CD8-positive, alpha-beta memory T cell (primary cell): ENCODE measurements at regions of chr18 and their contacts with region 1.

Region 1: GRCh38 chr18:59070181-59070912 is 69.3 kb upstream of the SEC11C start:
- DNase-seq: peak; percentile 38 to 74 (median 58)
- H3K4me3 ChIP-seq: no peak overlapping the region
- H3K4me3 Mint-ChIP-seq: no peak overlapping the region
- H3K27ac ChIP-seq: no peak overlapping the region
- H3K27ac Mint-ChIP-seq: no peak overlapping the region
- H3K4me1 ChIP-seq: no peaks in the 10 kb centered on the region
- H3K4me1 Mint-ChIP-seq: no peaks in the 10 kb centered on the region
- H3K27me3 ChIP-seq: no peaks in the 10 kb centered on the region
- H3K27me3 Mint-ChIP-seq: peaks cover 0 to 3% of the 10 kb centered on the region in 2 donors

Region 2: DNA sequence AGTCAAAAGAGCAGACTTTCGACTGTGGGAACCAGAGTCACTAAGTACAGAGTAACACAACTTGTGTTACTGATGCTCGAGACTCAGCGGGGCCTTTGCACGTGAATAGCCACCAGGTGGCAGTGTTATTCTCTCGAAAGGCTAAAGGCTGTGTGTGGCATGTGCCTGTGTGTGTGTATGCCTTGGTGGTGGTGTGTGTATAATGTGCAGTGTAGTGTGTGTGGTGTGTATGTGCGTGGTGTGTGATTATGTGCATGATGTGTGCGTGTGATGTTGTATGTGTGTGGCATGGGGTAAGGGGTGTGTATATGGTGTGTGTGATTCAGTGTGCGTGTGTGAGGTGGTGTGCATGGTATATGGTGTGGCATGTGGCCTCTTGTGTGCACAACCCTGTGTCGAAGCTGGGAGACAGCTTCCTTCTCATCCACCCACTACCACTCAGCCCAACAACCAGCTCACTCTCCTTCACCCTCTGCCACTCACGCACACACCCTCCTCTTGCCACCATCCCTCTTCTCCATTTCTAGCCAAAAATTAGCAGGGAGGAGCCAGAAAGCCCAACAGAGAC is 288.6 kb before region 1 on chr18:
- CTCF ChIA-PET with region 1: interaction called, 19 read pairs
- POLR2A ChIA-PET with region 1: no interaction called
- DNase-seq: peak; percentile 36 to 68 (median 41)
- H3K4me3 ChIP-seq: no peak overlapping the region
- H3K4me3 Mint-ChIP-seq: no peak overlapping the region
- H3K27ac ChIP-seq: no peak overlapping the region
- H3K27ac Mint-ChIP-seq: no peak overlapping the region
- H3K4me1 ChIP-seq: no peaks in the 10 kb centered on the region
- H3K4me1 Mint-ChIP-seq: no peaks in the 10 kb centered on the region
- H3K27me3 ChIP-seq: no peaks in the 10 kb centered on the region
- H3K27me3 Mint-ChIP-seq: peaks cover 4 to 25% of the 10 kb centered on the region in 2 donors

Region 3: DNA sequence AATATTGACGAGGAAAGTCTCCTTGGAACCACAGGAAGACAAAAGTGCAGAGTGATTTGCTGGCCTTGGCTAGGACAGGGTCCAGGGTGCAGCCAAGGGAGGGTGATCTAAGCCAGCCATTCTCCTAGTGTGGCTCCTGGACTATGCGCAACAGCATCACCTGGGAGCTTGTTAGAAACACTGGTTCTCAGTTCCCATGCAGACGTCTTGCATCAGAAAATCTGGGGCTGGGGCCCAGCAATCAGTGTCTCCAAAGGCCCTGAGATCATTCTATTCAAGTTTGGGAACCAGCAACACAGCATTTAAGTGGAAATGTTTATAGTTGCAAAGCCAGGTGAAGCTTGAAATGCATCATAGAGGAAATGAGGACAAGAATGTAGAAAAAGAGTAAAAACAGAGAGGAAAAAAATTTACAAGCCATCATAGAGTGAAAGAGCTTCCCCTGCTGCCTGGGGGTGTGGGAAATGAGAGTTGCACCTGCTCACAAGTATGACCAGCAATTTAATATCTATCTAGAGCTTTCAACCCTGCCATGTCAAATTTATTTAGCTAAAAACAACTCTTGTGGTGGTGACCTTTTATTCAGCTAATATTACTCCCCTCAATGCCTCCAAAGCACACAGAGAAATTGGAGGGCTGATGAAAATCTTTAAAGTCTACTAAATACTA is 14.9 kb after region 1 on chr18:
- CTCF ChIA-PET with region 1: interaction called, 13 read pairs
- POLR2A ChIA-PET with region 1: no interaction called
- DNase-seq: no peak
- H3K4me3 ChIP-seq: no peak overlapping the region
- H3K4me3 Mint-ChIP-seq: no peak overlapping the region
- H3K27ac ChIP-seq: no peak overlapping the region
- H3K27ac Mint-ChIP-seq: no peak overlapping the region
- H3K4me1 ChIP-seq: no peaks in the 10 kb centered on the region
- H3K4me1 Mint-ChIP-seq: peaks cover 5 to 6% (median 6%) of the 10 kb centered on the region in 3 donors
- H3K27me3 ChIP-seq: peaks cover 4% of the 10 kb centered on the region
- H3K27me3 Mint-ChIP-seq: peaks cover 27 to 39% of the 10 kb centered on the region in 2 donors

Region 4: GRCh38 chr18:59484837-59485328 is 414.5 kb after region 1 on chr18:
- CTCF ChIA-PET with region 1: no interaction called
- POLR2A ChIA-PET with region 1: no interaction called
- DNase-seq: no peak
- H3K4me3 ChIP-seq: no peak overlapping the region
- H3K4me3 Mint-ChIP-seq: no peak overlapping the region
- H3K27ac ChIP-seq: no peak overlapping the region
- H3K27ac Mint-ChIP-seq: no peak overlapping the region
- H3K4me1 ChIP-seq: no peaks in the 10 kb centered on the region
- H3K4me1 Mint-ChIP-seq: no peaks in the 10 kb centered on the region
- H3K27me3 ChIP-seq: no peaks in the 10 kb centered on the region
- H3K27me3 Mint-ChIP-seq: peaks cover 1 to 5% of the 10 kb centered on the region in 2 donors